Left cardiac atrium (tissue), 4 donors: ENCODE measurements at regions of chr3 and their contacts with region 1.

Region 1: DNA sequence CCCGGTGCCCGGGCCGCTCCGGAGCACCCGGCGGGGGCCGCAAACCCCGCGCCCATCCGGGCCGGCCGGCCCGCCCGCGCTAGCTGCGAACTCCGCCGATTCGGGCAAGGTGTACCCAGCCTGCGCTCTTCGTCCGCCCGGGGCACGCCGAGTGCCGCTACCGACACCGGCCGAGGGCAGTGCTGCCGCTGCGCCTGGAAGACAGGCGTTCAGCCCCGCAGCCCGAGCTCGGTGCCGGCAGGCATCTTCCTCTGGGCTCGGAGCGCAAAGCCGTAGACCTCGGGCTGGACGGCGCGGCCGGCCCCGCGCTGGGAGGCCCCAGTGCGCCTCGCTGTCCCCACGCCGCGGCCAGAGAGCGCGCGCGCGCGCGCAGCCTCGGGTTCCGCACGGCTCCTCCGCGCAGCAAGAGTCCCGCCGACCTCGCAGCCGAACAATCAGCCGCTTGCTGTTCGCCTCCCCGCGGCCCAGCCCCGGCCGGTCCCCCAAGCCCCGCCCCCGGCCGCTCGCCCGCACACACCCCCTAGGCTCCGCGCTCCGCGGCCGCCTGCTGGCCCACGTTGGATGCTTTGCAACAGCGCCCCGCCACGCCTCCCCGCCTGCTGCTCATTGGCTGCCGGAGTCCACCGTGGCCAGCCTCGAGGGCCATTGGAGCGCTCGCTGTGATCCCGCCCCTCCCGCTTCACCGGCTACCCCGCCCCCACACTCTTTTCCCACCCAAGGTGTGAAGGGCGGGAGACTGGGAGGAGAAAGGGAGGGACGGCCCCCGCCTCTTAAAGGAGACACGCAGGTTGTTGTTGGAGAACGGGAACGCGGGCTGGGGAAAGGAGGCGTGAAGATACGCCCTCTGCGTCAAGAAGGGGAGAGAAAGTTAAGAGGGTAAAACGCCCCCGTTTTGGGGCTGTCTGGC is at the start of gene LRIG1:
- DNase-seq: peak; percentile 100
- ATAC-seq: peak; percentile 96 to 98
- total RNA-seq, gene LRIG1: 88.8 to 115 TPM

Region 2: GRCh38 chr3:66172394-66172793 is 328.4 kb before region 1 on chr3:
- intact Hi-C with region 1: no loop called
- DNase-seq: no peak
- ATAC-seq: no peak

Region 3: GRCh38 chr3:66407611-66408218 is 93.1 kb before region 1 on chr3:
- intact Hi-C with region 1: loop called (anchors 5 to 10 kb)
- DNase-seq: peak; percentile 77
- ATAC-seq: peak; percentile 63 to 64

Region 4: GRCh38 chr3:66520724-66521123 is 19.9 kb after region 1 on chr3:
- intact Hi-C with region 1: no loop called
- DNase-seq: no peak
- ATAC-seq: no peak

Region 5: DNA sequence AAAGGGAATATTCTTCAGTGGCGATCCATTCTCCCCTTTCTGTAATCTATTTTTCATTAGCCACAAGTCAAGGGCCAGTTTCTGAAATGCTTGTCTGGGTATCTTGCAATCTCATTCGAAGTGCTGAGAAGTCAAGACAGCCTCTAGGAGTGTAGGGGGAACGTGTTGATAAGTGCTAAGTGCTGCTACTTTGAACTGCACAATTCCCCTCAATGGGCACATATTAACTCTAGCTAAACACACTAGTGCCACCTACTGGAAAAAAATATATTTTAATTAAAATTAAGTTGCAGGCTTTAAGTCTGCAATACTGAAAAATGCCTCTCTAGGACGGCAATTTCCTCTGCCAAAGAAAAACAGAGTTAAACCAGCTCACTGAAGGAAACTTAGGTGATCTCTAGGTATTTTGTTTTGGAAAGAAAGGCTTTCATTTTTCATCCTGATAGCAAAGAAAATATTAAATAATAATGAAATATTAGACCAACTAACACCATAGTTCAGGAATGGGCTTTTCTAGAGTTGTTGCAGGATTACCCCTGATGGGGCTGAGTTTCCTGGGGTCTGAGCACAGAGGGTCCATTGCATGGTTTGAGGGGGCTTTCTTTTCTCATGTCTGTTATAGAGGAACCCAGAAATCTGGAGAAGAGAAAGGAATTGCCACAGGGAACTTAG is 315.4 kb after region 1 on chr3:
- intact Hi-C with region 1: loop called in 1 of 2 experiments (anchors 10 kb)
- DNase-seq: no peak
- ATAC-seq: peak; percentile 87 to 90

Region 6: DNA sequence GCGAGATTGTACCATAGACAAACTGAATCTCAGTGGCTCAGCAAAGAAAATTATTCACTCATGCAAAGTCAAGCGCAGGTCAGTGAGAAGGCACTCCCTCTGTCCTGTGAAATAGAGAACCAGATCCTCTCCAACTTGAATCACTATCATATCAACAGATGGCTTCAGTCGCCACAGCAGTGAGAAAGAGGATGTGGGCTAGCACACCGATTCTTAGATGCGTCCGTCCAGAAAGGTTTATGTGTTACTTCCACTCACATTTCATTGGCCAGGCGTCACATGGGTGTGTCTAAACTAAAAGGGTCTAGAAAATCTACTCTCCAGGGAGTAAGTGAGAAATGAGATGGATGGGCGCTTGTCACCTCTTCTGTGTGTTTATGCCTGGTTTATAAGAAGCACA is 355.7 kb after region 1 on chr3:
- intact Hi-C with region 1: no loop called
- DNase-seq: no peak
- ATAC-seq: no peak